Right ventricle myocardium inferior (tissue), 1 donor: ENCODE measurements at regions of chr1 and their contacts with region 1.

Region 1: DNA sequence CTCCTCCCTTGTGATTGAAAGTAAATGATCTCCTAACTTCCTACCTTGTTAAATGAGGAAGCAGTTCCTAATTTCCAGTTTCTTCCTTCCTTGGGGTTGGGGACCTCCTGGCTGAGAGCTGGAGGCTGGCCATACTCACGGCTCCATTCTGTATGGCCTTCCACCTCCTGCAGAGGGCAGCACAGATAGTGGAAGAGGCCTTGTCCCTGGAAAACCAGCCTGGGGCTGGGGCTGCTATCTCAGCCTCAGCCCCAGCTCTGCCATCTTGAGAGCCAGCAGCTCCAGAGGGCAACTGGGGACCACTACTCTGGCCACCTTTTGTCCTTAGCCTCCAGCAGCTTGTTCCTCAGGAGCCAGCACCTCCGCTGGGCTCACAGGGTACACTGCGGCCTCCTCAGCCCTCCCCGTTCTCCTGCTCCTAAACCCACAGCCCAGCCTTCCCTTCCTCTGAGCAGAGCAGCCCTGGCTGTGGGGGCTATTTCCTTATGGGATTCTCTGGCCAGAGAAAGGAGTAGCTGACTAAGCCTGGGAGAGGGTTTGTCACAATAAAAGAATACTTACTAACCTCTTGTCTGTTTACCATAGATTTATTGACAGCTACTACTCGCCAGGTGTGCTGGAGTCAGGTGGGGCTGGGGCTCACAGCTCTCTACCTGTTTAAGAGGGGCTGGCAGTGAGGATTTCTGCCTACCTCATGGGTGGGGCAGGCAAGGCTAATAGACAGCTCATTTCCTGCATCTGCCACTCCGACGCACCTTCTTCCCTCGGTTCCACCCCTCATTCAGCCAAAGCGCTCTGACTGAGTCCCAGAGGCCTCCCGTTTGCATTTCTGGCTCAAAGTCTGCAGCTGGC is 6.3 kb downstream of the TMEM234 start:
- DNase-seq: no peak
- ATAC-seq: peak; percentile 40

Region 2: DNA sequence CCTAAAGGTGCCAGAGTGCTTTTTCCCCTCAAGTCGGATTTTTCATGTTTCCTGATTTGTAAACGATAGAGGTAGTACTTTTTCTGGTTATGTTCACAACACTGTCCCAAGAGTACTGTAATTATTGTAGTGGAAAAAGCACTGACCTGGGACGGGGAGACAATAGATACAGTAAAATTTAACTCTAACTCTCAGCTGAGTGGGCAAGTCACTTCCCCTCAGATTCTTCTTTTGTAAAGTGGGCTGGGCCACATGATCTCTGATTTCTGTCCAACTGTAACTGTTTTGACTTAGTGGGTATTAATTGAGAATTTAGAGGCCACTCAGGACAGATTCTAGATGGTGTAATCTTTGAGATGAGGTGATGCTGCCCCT is 101.0 kb after region 1 on chr1:
- intact Hi-C with region 1: loop called (anchors 5 kb)
- DNase-seq: no peak
- ATAC-seq: no peak

Region 3: DNA sequence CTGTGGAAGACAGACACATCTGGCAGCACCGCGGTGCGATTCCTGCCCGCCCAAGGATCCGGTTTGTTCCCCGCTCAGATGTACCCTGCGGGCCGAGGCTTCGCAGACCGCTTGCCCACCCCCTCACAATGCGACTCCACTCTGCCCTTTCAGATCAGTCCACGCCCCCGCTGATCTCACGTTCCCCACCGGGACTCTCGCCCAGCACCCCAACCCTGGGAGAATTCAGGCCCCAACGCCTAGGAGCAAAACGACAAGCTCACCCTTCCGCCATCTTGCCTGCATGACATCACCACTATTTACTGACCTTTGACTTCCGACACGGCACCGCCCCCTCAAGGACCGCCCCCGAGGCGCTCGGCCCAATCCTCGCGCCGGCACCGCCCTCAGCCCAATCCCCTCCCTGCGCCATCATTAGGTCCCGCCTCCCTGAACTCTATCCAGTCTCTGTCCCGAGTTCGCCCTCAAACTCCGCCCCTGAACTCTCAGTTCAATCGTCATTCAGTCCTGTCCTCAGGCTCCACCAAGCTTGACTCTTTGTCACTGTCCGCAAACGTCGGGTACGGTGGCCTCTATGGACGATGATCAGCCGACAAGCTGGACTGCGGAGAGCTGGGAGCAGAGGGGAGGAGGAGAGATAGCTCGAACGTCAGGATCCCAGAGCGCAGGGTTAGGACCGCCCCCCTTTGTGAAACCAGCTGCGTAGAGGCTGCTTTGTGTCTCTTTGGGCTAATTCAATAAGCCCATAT is 178.5 kb after region 1 on chr1 and contains the start of gene BSDC1:
- intact Hi-C with region 1: loop called (anchors 10 kb)
- DNase-seq: peak; percentile 97
- ATAC-seq: peak; percentile 99
- total RNA-seq, gene BSDC1: 41.8 TPM